Activated naive CD8-positive, alpha-beta T cell treated with anti-CD3 and anti-CD28 coated beads, Interleukin-2, amount 10 ng/mL, durations not matched to agents 7 days and 5 days (primary cell): ENCODE measurements at regions of chr3 and their contacts with region 1.

Region 1: GRCh38 chr3:150408221-150409102 is at the start of gene TSC22D2:
- DNase-seq: peak; percentile 97
- ATAC-seq: peak; percentile 70
- H3K4me3 Mint-ChIP-seq: peak within 1 kb of the TSS; percentile 87
- H3K27ac Mint-ChIP-seq: peak within 1 kb of the TSS; percentile 92
- H3K4me1 Mint-ChIP-seq: peaks cover 28% of the 10 kb centered on the region
- H3K27me3 Mint-ChIP-seq: peaks cover 2% of the 10 kb centered on the region
- total RNA-seq, gene TSC22D2: 15.5 to 15.8 TPM

Region 2: DNA sequence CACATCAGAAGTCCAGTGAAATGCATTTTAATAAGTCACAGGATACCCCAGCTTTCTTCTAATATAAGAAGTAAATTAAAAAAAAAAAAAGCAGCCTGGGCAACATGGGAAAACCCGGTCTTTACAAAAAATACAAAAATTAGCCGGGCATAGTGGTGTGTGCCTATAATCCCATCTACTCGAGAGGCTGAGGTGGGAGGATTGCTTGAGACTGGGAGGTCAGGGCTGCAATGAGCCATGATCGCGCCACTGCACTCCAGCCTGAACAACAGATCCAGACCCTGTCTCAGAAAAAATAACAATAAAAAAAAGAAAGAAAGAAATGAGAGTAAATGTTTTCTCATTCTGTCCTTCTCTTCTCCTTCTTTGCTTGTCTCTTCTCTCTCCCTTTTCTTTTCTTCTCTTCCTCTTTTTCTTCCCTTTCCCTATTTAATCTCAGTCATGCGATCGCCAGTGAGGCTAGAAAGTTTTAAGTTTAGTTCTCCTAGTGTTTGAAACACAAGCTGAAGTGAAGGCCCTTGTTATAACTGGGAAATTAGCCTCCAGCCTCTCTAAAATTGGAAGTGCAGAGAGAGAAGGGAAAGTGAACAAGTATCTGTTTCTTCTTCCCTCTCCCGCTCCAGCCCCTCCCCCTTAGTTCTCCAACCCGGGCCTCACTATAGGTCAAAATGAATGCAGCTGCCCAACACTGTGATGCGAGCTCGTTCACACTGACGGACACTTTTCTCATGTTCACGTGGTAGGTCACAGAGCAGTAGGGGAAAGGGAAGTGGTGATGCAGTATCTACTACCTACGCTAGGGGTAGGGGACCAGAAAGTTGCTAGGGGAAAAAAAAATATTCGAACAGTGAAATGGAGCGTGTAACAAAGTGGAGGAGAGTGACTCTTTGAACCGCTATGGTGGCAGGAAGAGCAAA is 23.9 kb before region 1 on chr3:
- POLR2A ChIA-PET with region 1: interaction called, 28 read pairs
- DNase-seq: peak; percentile 37
- ATAC-seq: peak; percentile 96
- H3K4me3 Mint-ChIP-seq: peak overlapping the region; percentile 71
- H3K27ac Mint-ChIP-seq: peak overlapping the region; percentile 80
- H3K4me1 Mint-ChIP-seq: peaks cover 20% of the 10 kb centered on the region
- H3K27me3 Mint-ChIP-seq: no peaks in the 10 kb centered on the region

Region 3: DNA sequence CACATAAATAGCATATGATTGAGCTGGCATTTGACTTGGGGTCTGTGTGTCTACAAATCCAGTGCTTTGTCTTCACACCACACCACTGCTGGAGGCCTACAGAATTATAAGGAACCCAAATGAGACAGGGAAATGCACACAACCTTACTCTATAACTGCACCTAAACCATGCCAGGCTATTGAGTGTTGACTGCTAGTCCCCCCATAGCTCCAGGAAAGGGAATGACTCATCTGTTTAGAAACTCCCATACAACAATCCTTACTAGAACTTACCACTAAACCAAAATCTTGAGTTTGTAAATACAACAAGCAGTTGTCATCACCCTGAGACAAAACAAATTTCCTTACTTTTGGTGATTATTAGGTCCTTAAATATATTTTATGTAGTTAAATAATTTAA is 17.3 kb before region 1 on chr3:
- POLR2A ChIA-PET with region 1: interaction called, 10 read pairs
- DNase-seq: no peak
- ATAC-seq: no peak
- H3K4me3 Mint-ChIP-seq: no peak overlapping the region
- H3K27ac Mint-ChIP-seq: no peak overlapping the region
- H3K4me1 Mint-ChIP-seq: peaks cover 4% of the 10 kb centered on the region
- H3K27me3 Mint-ChIP-seq: peaks cover 4% of the 10 kb centered on the region

Region 4: DNA sequence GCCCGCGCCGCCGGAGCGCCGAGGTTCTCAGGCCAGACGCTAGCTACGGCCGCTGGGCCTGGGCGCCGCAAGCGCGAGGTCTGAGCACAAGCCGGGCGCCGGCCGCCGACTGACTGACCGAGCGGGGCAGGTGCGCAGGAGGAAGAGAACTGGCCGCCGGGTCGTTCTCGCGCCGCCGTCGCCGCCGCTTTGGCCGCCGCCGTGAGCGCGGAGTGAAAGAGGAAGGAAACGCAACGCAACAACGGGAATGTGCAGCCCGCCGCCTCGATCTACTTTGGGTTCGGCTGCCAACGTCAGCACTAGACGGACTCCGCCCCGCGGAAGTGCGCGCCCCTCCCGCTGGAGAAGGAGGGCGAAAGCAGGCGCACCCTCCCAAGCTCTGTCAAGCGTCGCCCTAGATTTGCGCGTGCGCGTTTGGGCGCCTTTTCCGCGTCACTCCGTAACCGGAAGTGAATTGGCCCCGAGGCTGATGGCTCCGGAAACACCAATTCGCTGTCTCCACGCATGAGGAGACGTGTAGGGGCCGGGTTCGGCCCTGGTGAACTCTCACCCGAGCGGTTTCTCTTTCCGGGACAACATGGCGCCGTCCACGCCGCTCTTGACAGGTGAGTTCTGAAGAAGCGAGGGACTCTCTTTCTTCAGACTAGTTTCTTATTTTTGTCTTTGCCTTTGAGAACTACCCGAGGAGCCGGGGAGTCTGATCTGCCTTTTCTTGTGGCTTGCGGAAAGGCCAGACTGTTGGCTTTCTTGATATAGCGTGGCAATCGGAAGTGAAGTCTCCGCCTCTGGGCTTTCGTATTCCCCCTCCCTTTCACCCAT is 138.0 kb after region 1 on chr3 and contains the starts of genes EIF2A and SERP1:
- POLR2A ChIA-PET with region 1: interaction called, 16 read pairs
- DNase-seq: peak; percentile 98
- ATAC-seq: peak; percentile 92
- H3K4me3 Mint-ChIP-seq: peak within 1 kb of the TSS; percentile 100
- H3K27ac Mint-ChIP-seq: peak within 1 kb of the TSS; percentile 96
- H3K4me1 Mint-ChIP-seq: peaks cover 46% of the 10 kb centered on the region
- H3K27me3 Mint-ChIP-seq: no peaks in the 10 kb centered on the region
- total RNA-seq, gene EIF2A: 82.2 to 84.2 TPM
- total RNA-seq, gene SERP1: 89.4 to 89.8 TPM

Region 5: DNA sequence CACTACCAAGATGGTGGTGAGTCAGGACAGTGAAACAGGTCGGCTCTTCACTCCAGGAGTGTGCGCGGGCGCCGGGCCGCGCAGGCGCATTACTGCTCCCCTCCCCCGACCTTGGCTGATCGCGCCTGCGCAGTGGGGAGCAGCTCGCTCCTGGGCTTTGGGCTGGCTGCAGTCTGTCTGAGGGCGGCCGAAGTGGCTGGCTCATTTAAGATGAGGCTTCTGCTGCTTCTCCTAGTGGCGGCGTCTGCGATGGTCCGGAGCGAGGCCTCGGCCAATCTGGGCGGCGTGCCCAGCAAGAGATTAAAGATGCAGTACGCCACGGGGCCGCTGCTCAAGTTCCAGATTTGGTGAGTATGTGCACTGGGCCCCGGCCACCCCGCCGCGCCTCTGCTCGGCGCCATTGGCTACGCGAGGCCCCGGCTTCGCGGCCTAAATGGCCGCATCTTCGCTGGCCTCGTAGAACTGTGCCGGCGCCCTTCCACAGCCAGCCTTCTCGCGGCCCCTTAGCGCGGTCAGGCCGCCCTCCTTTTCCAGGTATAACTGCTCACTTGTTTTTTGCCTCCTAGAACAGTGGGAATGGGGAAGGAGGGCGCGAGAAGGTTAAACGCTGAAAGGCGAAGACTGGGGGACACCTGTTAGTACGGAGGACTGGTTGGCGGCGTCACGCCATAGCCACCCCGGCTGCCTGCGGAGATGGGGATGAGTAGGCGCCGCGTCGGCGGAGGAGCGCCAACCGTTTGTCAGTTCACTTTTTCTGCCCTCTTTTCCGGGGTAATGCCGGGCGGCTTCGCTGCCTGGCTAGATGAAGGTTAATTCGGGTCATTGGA is 194.9 kb after region 1 on chr3 and contains the start of gene SELENOT:
- POLR2A ChIA-PET with region 1: interaction called, 10 read pairs
- DNase-seq: peak; percentile 98
- ATAC-seq: peak; percentile 91
- H3K4me3 Mint-ChIP-seq: peak within 1 kb of the TSS; percentile 88
- H3K27ac Mint-ChIP-seq: peak within 1 kb of the TSS; percentile 92
- H3K4me1 Mint-ChIP-seq: peaks cover 46% of the 10 kb centered on the region
- H3K27me3 Mint-ChIP-seq: no peaks in the 10 kb centered on the region
- total RNA-seq, gene SELENOT: 92.5 to 94.2 TPM